ENCODE measurements at regions of chr7 and their contacts with region 1.

Region 1: DNA sequence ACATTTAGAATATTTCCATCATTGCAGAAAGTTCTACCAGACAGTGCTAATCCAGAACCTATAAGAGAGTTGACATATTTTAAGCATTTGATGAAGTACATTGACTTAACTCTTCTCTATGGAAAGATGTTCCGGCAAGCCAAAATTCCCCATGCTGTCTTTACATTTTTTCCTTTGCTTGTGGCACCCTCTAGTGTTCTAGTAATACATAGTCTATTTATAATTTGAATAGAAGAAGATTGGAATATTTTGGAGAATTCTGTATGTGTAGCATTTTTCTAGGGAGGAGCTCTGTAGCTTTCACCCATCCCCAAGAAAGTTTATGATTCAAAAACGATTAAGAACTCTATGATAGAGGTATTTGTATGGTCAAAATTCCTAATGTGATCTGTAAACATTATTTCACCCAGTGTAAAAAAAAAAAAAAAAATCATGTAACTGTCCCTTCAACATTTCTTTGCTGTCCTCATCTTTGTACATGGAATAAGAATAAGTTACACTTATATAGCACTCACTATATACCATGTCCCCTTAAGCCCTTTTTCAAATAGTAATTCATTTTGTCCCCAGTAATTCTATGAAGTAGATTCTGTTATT is 33.2 kb downstream of the NRF1 start:
- DNase-seq: peak in 1 of 2 experiments; percentile 55
- ATAC-seq: peak in 1 of 2 experiments; percentile 67; a peak in 3 of 6 replicates
- H3K4me3 ChIP-seq: no peak overlapping the region
- H3K27ac ChIP-seq: no peak overlapping the region
- H3K4me1 ChIP-seq: peaks cover 28% of the 10 kb centered on the region; the same call in 2 of the 3 replicates
- CTCF ChIP-seq: peak; percentile 79
- EP300 ChIP-seq: no peak
- POLR2A ChIP-seq: no peak
- RAD21 ChIP-seq: peak; percentile 81

Region 2: DNA sequence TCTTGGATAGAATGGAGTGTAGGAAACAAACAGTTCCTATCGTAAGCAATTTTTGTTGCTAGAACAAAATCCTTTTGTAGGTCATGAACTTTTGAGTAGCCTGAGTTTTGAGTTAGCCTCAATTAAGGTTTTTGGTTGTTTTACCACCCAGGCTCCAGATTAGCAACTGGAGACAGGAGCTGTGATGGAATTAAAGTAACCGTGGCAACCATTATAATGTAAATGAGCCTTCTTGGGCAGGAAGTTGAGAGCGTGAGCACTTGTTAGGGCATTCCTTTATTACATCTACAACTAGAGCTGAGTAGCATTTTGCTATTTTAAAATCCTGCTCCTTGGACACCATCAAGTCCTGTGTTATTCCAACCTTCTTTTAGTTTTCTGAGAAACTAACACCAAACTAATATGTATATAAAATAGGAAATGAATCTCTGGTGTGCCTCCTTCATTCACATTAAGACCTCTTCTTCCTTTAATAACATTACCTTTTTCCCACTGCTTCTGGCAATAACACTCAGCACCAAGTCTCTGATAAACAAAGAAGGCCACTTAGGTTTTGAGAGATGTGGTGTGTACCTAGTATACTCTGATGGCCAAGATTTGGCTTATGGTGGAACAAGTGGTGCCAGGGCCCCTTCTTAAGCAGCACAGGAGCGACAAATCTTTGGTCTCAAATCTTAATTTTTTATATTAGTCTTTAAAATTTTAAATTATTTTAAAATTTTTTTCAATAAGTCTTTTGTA is 385.9 kb before region 1 on chr7:
- CTCF ChIA-PET with region 1: no interaction called
- POLR2A ChIA-PET with region 1: no interaction called
- DNase-seq: no peak
- ATAC-seq: no peak
- H3K4me3 ChIP-seq: no peak overlapping the region
- H3K27ac ChIP-seq: no peak overlapping the region
- H3K4me1 ChIP-seq: peaks cover 4% of the 10 kb centered on the region; the same call in 1 of the 3 replicates
- CTCF ChIP-seq: no peak
- EP300 ChIP-seq: no peak
- POLR2A ChIP-seq: no peak
- RAD21 ChIP-seq: no peak

Region 3: GRCh38 chr7:129376076-129376777 is 268.5 kb before region 1 on chr7:
- CTCF ChIA-PET with region 1: interaction called, 24 read pairs
- POLR2A ChIA-PET with region 1: no interaction called
- DNase-seq: peak; percentile 61 to 65
- ATAC-seq: peak; percentile 91 to 97
- H3K4me3 ChIP-seq: no peak overlapping the region
- H3K27ac ChIP-seq: no peak overlapping the region
- H3K4me1 ChIP-seq: peaks cover 3% of the 10 kb centered on the region; the same call in 1 of the 3 replicates
- CTCF ChIP-seq: peak; percentile 65
- EP300 ChIP-seq: no peak
- POLR2A ChIP-seq: no peak
- RAD21 ChIP-seq: peak in 1 of 2 experiments; percentile 49; a peak in 2 of 5 replicates

Region 4: GRCh38 chr7:129664029-129665012 is 19.6 kb after region 1 on chr7:
- CTCF ChIA-PET with region 1: interaction called, 13 read pairs
- POLR2A ChIA-PET with region 1: no interaction called
- DNase-seq: peak; percentile 68 to 75
- ATAC-seq: peak; percentile 85 to 86
- H3K4me3 ChIP-seq: no peak overlapping the region
- H3K27ac ChIP-seq: peak overlapping the region; percentile 68 to 85
- H3K4me1 ChIP-seq: peaks cover 27% of the 10 kb centered on the region
- CTCF ChIP-seq: peak; percentile 87
- EP300 ChIP-seq: no peak
- POLR2A ChIP-seq: no peak
- RAD21 ChIP-seq: peak; percentile 84 to 90

Measured in A549 (cell line).